Transverse colon (tissue), 4 donors: ENCODE measurements at regions of chr3 and their contacts with region 1.

Region 1: DNA sequence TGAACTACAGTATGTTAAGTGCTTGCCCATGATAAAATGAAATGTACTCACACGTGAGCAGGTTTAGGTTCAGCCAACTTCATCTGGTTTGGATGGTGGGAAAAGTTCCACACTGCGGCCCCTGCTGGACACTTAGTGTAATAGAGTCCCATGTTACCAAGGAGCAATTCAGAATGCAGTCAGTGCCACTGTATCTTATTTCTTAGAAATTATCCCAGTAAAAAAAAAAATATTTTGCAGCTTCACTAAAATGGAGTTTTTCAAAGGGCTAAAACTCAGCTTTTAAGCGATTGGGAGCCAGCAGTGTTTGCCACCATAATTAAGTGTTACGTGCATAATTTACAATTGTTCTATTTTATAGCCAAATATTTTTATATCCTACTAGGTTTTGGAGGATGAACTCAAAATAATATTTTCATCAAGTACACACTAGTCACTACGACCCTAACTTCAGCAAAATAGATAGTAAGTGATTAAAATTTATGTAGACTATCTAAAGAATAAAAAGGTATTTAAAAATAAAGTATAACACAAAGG is 371.7 kb upstream of the GBE1 start:
- DNase-seq: peak; percentile 48
- H3K4me3 ChIP-seq: no peak overlapping the region
- H3K27ac ChIP-seq: no peak overlapping the region
- H3K4me1 ChIP-seq: no peaks in the 10 kb centered on the region
- H3K27me3 ChIP-seq: no peaks in the 10 kb centered on the region
- CTCF ChIP-seq: peak; percentile 63 to 80 (median 74)
- EP300 ChIP-seq: no peak
- POLR2A ChIP-seq: no peak

Region 2: GRCh38 chr3:81666493-81667121 is 466.5 kb before region 1 on chr3:
- in situ Hi-C with region 1: loop called in 1 of 4 experiments (anchors 25 kb)
- intact Hi-C with region 1: no loop called
- DNase-seq: no peak
- H3K4me3 ChIP-seq: no peak overlapping the region
- H3K27ac ChIP-seq: no peak overlapping the region
- H3K4me1 ChIP-seq: no peaks in the 10 kb centered on the region
- H3K27me3 ChIP-seq: no peaks in the 10 kb centered on the region
- CTCF ChIP-seq: peak; percentile 50 to 72 (median 60)
- EP300 ChIP-seq: no peak
- POLR2A ChIP-seq: no peak

Region 3: GRCh38 chr3:81760924-81761903 is 371.9 kb before region 1 on chr3 and contains the start of gene GBE1:
- in situ Hi-C with region 1: no loop called
- intact Hi-C with region 1: no loop called
- DNase-seq: peak; percentile 93
- H3K4me3 ChIP-seq: peak within 1 kb of the TSS; percentile 40 to 81 (median 72)
- H3K27ac ChIP-seq: peak within 1 kb of the TSS; percentile 90 to 99 (median 98)
- H3K4me1 ChIP-seq: peaks cover 0 to 20% (median 15%) of the 10 kb centered on the region in 4 donors
- H3K27me3 ChIP-seq: no peaks in the 10 kb centered on the region
- CTCF ChIP-seq: peak in 4 of 5 experiments; percentile 19 to 45 (median 32)
- EP300 ChIP-seq: no peak
- POLR2A ChIP-seq: peak; percentile 87
- total RNA-seq, gene GBE1: 3.0 to 24.3 (median 16.7) TPM

Region 4: GRCh38 chr3:81823882-81824395 is 309.2 kb before region 1 on chr3:
- in situ Hi-C with region 1: no loop called
- intact Hi-C with region 1: no loop called
- DNase-seq: no peak
- H3K4me3 ChIP-seq: no peak overlapping the region
- H3K27ac ChIP-seq: no peak overlapping the region
- H3K4me1 ChIP-seq: no peaks in the 10 kb centered on the region
- H3K27me3 ChIP-seq: no peaks in the 10 kb centered on the region
- CTCF ChIP-seq: no peak
- EP300 ChIP-seq: no peak
- POLR2A ChIP-seq: no peak

Region 5: DNA sequence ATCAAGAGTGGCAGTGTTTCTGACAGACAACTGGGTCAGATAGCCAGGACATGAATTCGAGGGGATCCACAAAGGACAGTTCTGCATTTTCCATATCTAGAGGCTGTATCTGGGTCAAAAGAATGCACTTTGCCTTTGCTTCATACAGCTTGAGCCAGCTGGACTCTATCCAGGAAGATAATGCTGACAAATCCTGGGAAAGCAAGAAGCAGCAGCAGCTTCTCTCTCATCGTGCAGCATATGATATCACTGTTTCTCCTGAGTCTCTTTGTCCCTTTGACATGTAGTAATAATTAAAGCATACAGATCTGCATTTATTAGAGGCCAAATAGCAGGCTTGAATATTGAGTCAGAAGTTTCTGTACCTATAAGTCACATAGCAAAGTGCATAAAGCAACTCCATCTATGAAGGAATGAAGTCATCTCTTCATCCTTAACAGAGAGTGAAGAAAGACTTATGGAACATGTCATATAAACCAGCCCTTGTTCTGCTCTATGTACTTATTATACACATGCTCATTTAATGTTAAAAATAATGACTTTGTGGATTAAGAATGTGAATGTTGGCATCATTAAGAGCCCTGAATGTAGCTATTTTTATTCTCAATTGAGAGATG is 134.9 kb before region 1 on chr3:
- in situ Hi-C with region 1: no loop called
- intact Hi-C with region 1: no loop called
- DNase-seq: no peak
- H3K4me3 ChIP-seq: no peak overlapping the region
- H3K27ac ChIP-seq: no peak overlapping the region
- H3K4me1 ChIP-seq: peaks cover 0 to 3% (median 0%) of the 10 kb centered on the region in 4 donors
- H3K27me3 ChIP-seq: no peaks in the 10 kb centered on the region
- CTCF ChIP-seq: no peak
- EP300 ChIP-seq: no peak
- POLR2A ChIP-seq: no peak